ENCODE measurements at regions of chr2 and their contacts with region 1.

Region 1: GRCh38 chr2:23926750-23927571 is at the start of gene ATAD2B:
- DNase-seq: peak; percentile 55
- H3K4me3 ChIP-seq: peak within 1 kb of the TSS; percentile 69 to 96 (median 87)
- H3K27ac ChIP-seq: peak within 1 kb of the TSS; percentile 97 to 99 (median 98)
- H3K4me1 ChIP-seq: peaks cover 9 to 57% (median 19%) of the 10 kb centered on the region in 3 donors
- H3K27me3 ChIP-seq: no peaks in the 10 kb centered on the region
- CTCF ChIP-seq: peak; percentile 74 to 95 (median 86)
- POLR2A ChIP-seq: peak in 3 of 4 donors; percentile 57 to 87 (median 81)
- total RNA-seq, gene ATAD2B: 7.4 to 29.2 (median 20.8) TPM

Region 2: GRCh38 chr2:24075915-24076848 is 149.2 kb after region 1 on chr2 and contains the start of gene SF3B6:
- intact Hi-C with region 1: loop called (anchors 10 kb)
- DNase-seq: peak; percentile 99
- H3K4me3 ChIP-seq: peak within 1 kb of the TSS; percentile 60 to 86 (median 76)
- H3K27ac ChIP-seq: peak within 1 kb of the TSS; percentile 97 to 100 (median 98)
- H3K4me1 ChIP-seq: peaks cover 15 to 45% (median 15%) of the 10 kb centered on the region in 3 donors
- H3K27me3 ChIP-seq: no peaks in the 10 kb centered on the region
- CTCF ChIP-seq: no peak
- POLR2A ChIP-seq: peak in 3 of 4 donors; percentile 25 to 84 (median 63)
- total RNA-seq, gene SF3B6: 91.3 to 150 (median 125) TPM

Region 3: DNA sequence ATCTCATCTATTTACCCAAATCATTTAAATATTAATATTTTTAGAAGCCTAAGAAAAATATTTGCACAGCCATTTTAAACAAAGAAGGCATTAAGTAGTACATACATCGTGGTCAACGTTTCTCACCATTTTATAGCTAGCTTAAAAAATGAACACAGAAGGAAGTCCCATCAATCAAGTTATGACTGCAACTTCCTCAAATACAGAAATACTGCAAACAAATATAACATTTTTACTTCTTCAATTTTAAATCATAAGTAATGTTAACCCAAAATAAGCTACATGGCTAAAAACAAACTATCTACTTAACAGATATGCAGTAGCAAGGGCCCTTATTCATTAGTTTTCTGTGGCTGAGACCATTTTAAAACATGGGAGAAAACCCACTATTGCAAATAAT is 402.7 kb after region 1 on chr2:
- intact Hi-C with region 1: no loop called
- DNase-seq: no peak
- H3K4me3 ChIP-seq: no peak overlapping the region
- H3K27ac ChIP-seq: no peak overlapping the region
- H3K4me1 ChIP-seq: peaks cover 4 to 60% (median 6%) of the 10 kb centered on the region in 3 donors
- H3K27me3 ChIP-seq: no peaks in the 10 kb centered on the region
- CTCF ChIP-seq: no peak
- POLR2A ChIP-seq: no peak